Naive thymus-derived CD4-positive, alpha-beta T cell (primary cell): ENCODE measurements at regions of chr12 and their contacts with region 1.

Region 1: DNA sequence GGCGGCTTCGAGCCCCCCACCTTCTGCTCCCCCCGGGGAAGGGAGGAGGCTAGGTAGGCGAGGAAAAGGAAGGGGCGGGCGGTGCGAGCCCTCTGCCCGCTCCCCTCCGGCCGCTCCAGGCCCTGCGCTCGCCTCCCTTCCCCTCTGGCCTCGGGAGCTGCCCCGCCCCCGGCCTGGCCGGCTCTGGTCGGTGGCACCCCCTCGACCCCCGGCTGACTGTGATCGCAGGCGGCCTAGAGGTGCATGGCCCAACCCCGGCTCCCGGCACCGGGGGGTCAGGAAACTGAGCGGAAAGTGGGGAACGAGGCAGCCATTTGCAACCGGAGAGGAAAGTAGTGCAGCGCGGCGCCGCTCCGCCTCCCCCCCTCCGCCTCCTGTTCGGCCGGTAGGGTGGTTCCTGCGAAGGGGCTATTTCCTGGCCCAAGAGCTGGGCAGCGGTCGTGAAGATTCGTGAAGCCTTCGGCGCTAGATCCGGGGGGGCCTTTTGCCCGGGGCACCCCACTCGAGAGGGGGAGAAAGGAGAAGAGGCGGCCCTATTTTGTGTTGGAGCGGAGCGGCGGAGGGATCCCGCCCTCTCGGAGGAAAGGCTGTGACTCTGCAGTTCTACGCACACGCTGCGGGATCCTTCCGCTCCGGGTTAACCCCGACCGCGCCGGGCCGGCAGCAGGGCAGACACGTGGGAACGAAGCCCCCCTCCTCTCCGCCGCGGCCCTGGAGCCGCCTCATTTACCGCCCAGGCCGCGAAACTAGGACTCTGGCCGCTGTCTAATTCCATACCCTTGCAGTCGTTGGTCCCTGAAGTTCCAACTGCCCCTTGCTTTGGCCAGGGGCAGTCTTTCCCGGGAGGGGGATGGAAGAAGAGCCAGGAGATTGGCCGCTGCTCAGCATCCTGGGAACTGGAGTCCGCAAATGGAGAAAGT is at the start of gene KMT2D:
- DNase-seq: peak; percentile 80 to 94 (median 91)
- ATAC-seq: peak; percentile 86
- H3K4me3 ChIP-seq: peak within 1 kb of the TSS; percentile 87
- H3K4me3 Mint-ChIP-seq: peak within 1 kb of the TSS; percentile 91 to 98 (median 95)
- H3K27ac ChIP-seq: peak within 1 kb of the TSS; percentile 87
- H3K27ac Mint-ChIP-seq: peak within 1 kb of the TSS; percentile 90 to 99 (median 97)
- H3K4me1 ChIP-seq: peaks cover 38 to 40% of the 10 kb centered on the region in 2 donors
- H3K4me1 Mint-ChIP-seq: peaks cover 44 to 55% (median 51%) of the 10 kb centered on the region in 7 donors
- H3K27me3 ChIP-seq: no peaks in the 10 kb centered on the region
- H3K27me3 Mint-ChIP-seq: no peaks in the 10 kb centered on the region
- total RNA-seq, gene KMT2D: 129 to 167 (median 151) TPM

Region 2: GRCh38 chr12:49088190-49088931 is 27.9 kb after region 1 on chr12:
- CTCF ChIA-PET with region 1: interaction called, 55 read pairs
- POLR2A ChIA-PET with region 1: interaction called, 9 read pairs
- intact Hi-C with region 1: loop called (anchors 1 kb)
- DNase-seq: peak; percentile 39 to 73 (median 70)
- ATAC-seq: peak; percentile 94
- H3K4me3 ChIP-seq: no peak overlapping the region
- H3K4me3 Mint-ChIP-seq: peak overlapping the region in 7 of 10 donors; percentile 11 to 59 (median 48)
- H3K27ac ChIP-seq: no peak overlapping the region
- H3K27ac Mint-ChIP-seq: peak overlapping the region in 2 of 9 donors; percentile 5 to 34
- H3K4me1 ChIP-seq: peaks cover 35 to 40% of the 10 kb centered on the region in 2 donors
- H3K4me1 Mint-ChIP-seq: peaks cover 22 to 53% (median 38%) of the 10 kb centered on the region in 7 donors
- H3K27me3 ChIP-seq: peaks cover 14 to 37% of the 10 kb centered on the region in 2 donors
- H3K27me3 Mint-ChIP-seq: peaks cover 32 to 58% (median 49%) of the 10 kb centered on the region in 5 donors

Region 3: DNA sequence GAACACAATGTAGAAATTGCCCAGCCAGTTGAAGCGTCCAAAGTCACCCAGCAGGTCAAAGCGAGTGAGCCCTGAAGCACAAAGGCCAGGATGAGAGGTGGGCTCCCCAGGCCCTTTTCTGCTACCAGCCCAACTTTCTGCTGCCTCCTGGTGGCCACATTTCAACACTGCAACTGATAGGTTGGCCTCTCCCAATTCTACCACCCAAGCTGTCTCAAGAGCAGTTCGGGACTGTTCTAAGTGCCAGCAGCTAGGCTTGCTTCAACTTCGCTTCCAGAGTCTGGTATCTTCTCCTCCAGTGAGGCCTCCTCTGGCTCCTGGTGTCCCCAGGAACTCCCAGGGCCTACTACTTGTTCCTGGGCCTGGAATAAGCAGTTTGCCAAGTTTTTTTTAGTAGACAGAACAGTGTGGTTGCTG is 37.5 kb after region 1 on chr12:
- CTCF ChIA-PET with region 1: interaction called, 48 read pairs
- POLR2A ChIA-PET with region 1: interaction called, 6 read pairs
- intact Hi-C with region 1: loop called (anchors 1 kb)
- DNase-seq: peak; percentile 38 to 65 (median 58)
- ATAC-seq: peak; percentile 78
- H3K4me3 ChIP-seq: no peak overlapping the region
- H3K4me3 Mint-ChIP-seq: no peak overlapping the region
- H3K27ac ChIP-seq: no peak overlapping the region
- H3K27ac Mint-ChIP-seq: peak overlapping the region in 2 of 9 donors; percentile 23 to 51
- H3K4me1 ChIP-seq: peaks cover 9 to 10% of the 10 kb centered on the region in 2 donors
- H3K4me1 Mint-ChIP-seq: peaks cover 0 to 22% (median 16%) of the 10 kb centered on the region in 7 donors
- H3K27me3 ChIP-seq: peaks cover 4 to 6% of the 10 kb centered on the region in 2 donors
- H3K27me3 Mint-ChIP-seq: peaks cover 14 to 23% (median 21%) of the 10 kb centered on the region in 5 donors